ENCODE measurements at regions of chr2 and their contacts with region 1.

Region 1: DNA sequence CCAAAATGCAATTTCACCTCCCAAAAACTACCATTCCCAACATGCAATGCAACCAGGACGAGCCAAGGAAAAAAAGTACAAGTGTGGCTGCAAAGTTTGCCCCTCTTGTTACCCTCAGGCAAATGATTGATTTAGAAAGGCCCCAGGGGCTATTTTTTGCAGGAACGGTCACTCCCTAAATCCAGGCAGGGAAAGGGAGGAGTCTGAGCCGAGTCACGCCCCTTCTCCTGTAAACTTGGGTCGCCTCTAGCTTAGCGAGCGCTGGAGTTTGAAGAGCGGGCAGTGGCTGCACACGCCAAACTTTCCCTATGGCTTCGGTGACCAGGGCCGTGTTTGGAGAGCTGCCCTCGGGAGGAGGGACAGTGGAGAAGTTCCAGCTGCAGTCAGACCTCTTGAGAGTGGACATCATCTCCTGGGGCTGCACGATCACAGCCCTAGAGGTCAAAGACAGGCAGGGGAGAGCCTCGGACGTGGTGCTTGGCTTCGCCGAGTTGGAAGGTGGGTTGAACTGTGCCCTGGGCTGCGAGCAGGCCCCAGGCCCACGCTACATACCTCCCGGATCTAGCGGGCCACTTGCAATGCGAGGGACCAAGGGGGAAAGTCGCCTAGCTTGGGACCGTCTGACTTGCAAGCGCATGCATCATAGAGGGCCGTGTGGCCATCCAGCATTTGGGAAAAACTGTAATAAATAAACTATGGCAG is at the start of gene GALM:
- DNase-seq: peak; percentile 77
- ATAC-seq: peak; percentile 32
- H3K4me3 Mint-ChIP-seq: peak within 1 kb of the TSS; percentile 89
- H3K27ac Mint-ChIP-seq: peak within 1 kb of the TSS; percentile 99
- H3K4me1 Mint-ChIP-seq: peaks cover 67% of the 10 kb centered on the region
- H3K27me3 Mint-ChIP-seq: no peaks in the 10 kb centered on the region
- total RNA-seq, gene GALM: 56.0 to 57.8 TPM

Region 2: DNA sequence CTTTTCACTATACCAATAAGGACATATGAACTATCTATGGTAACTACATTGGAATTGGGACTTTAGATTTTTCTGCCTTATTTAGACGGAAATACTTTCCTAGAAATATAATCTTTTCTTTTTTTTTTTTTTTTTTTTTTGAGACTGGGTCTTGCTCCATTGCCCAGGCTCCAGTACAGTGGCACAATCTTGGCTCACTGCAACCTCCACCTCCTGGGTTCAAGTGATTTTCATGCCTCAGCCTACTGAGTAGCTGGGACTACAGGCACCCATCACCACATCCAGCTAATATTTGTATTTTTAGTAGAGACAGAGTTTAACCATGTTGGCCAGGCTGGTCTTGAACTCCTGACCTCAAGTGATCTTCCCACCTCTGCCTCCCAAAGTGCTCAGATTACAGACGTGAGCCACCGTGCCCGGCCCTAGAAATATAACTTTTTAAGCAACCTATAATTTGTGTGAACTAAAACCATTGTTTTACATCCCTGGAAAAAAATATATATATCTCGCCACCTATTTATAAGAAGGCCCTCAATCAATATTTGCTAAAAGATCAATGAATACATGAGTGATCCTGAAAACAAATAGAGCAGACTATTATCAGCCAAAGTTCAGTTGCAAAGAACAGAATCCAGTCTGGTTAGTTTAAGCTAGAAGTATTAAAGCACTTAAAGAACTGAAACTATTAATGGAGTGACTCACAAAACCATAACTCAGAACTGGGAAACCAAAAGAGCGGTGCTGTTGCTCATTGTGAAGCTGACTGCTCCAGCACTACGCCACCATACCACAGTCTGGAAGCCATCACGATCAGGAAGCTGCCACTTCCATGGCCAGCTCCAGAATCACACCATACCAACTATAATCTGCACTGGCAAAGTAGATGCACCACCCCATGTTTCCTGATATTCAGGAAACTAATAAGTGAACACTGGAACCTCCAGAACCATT is 54.9 kb before region 1 on chr2:
- CTCF ChIA-PET with region 1: interaction called, 3 read pairs
- POLR2A ChIA-PET with region 1: no interaction called
- intact Hi-C with region 1: loop called (anchors 1 kb)
- DNase-seq: peak; percentile 46
- ATAC-seq: peak; percentile 75
- H3K4me3 Mint-ChIP-seq: no peak overlapping the region
- H3K27ac Mint-ChIP-seq: no peak overlapping the region
- H3K4me1 Mint-ChIP-seq: peaks cover 66% of the 10 kb centered on the region
- H3K27me3 Mint-ChIP-seq: peaks cover 2% of the 10 kb centered on the region

Region 3: GRCh38 chr2:38685116-38685735 is 19.2 kb after region 1 on chr2:
- CTCF ChIA-PET with region 1: interaction called, 19 read pairs
- POLR2A ChIA-PET with region 1: interaction called, 13 read pairs
- intact Hi-C with region 1: loop called (anchors 1 to 2 kb)
- DNase-seq: no peak
- ATAC-seq: peak; percentile 52
- H3K4me3 Mint-ChIP-seq: no peak overlapping the region
- H3K27ac Mint-ChIP-seq: no peak overlapping the region
- H3K4me1 Mint-ChIP-seq: peaks cover 47% of the 10 kb centered on the region
- H3K27me3 Mint-ChIP-seq: no peaks in the 10 kb centered on the region

Region 4: DNA sequence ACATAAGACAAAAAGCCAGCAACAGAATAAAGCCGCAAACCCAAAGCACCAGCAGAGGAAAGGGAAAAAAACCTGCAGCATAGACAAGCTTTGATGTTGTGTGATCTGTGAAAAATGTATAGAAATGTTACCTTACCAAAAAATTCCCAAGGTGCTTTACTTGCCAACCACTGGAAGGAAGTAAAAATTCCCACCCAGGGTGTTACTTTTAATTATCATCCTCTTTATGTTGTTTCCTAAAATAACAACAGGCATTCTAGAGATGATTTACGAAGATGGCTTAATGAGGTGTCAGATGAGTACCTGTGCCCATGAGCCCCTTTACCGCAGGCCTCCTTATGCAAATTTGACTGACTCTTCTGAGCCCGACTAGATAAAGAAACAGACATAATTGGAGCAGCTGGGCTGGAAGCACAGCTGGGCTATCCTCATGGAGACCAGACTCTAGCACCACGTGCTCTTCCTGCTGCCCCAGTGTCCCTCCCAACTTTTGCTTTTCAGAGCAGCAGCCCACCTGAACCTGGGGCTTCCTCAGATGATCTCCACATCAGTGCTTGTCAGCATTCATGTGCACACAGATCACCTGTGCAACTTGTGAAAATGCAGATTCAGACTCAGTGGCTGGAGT is 43.7 kb after region 1 on chr2:
- CTCF ChIA-PET with region 1: interaction called, 4 read pairs
- POLR2A ChIA-PET with region 1: no interaction called
- intact Hi-C with region 1: loop called (anchors 1 to 2 kb)
- DNase-seq: peak; percentile 70
- ATAC-seq: peak; percentile 75
- H3K4me3 Mint-ChIP-seq: peak overlapping the region; percentile 48
- H3K27ac Mint-ChIP-seq: peak overlapping the region; percentile 88
- H3K4me1 Mint-ChIP-seq: peaks cover 76% of the 10 kb centered on the region
- H3K27me3 Mint-ChIP-seq: no peaks in the 10 kb centered on the region

Measured in activated CD4-positive, alpha-beta T cell treated with anti-CD3 and anti-CD28 coated beads for 36 hours (primary cell).